CD8-positive, alpha-beta T cell (primary cell): ENCODE measurements at regions of chr5 and their contacts with region 1.

Region 1: GRCh38 chr5:32232441-32233219 is 58.5 kb upstream of the GOLPH3 start:
- DNase-seq: peak; percentile 54 to 86 (median 76)
- ATAC-seq: peak; percentile 88
- H3K4me3 ChIP-seq: no peak overlapping the region
- H3K4me3 Mint-ChIP-seq: no peak overlapping the region
- H3K27ac ChIP-seq: peak overlapping the region in 1 of 2 experiments; percentile 23
- H3K27ac Mint-ChIP-seq: peak overlapping the region; percentile 79
- H3K4me1 ChIP-seq: no peaks in the 10 kb centered on the region
- H3K4me1 Mint-ChIP-seq: no peaks in the 10 kb centered on the region
- H3K27me3 ChIP-seq: no peaks in the 10 kb centered on the region
- H3K27me3 Mint-ChIP-seq: no peaks in the 10 kb centered on the region
- CTCF ChIP-seq: peak; percentile 61

Region 2: DNA sequence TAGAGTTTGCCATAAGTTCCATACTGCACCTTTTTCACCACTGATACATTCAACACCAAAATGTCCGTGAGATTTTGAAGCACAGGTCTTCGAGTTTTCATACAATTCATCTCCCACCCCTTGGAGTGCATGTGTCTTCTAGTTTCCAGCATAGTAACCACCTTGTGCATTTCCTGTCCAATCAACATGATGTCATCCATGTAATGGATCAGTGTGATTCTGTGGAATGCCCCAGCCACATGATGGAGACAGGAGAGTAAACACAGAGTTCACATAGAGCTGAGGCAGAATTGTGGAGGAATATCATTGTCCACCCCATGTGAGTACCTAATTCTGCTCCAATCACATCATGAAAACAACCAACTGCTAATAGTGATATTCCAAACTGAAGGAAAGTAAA is 1480.6 kb before region 1 on chr5:
- CTCF ChIA-PET with region 1: no interaction called
- POLR2A ChIA-PET with region 1: no interaction called
- intact Hi-C with region 1: no loop called
- DNase-seq: no peak
- ATAC-seq: no peak
- H3K4me3 ChIP-seq: no peak overlapping the region
- H3K4me3 Mint-ChIP-seq: no peak overlapping the region
- H3K27ac ChIP-seq: no peak overlapping the region
- H3K27ac Mint-ChIP-seq: no peak overlapping the region
- H3K4me1 ChIP-seq: no peaks in the 10 kb centered on the region
- H3K4me1 Mint-ChIP-seq: no peaks in the 10 kb centered on the region
- H3K27me3 ChIP-seq: no peaks in the 10 kb centered on the region
- H3K27me3 Mint-ChIP-seq: no peaks in the 10 kb centered on the region
- CTCF ChIP-seq: no peak

Region 3: GRCh38 chr5:32339198-32339597 is 106.6 kb after region 1 on chr5:
- CTCF ChIA-PET with region 1: interaction called, 15 read pairs
- POLR2A ChIA-PET with region 1: no interaction called
- intact Hi-C with region 1: no loop called
- DNase-seq: no peak
- ATAC-seq: no peak
- H3K4me3 ChIP-seq: no peak overlapping the region
- H3K4me3 Mint-ChIP-seq: no peak overlapping the region
- H3K27ac ChIP-seq: no peak overlapping the region
- H3K27ac Mint-ChIP-seq: no peak overlapping the region
- H3K4me1 ChIP-seq: no peaks in the 10 kb centered on the region
- H3K4me1 Mint-ChIP-seq: no peaks in the 10 kb centered on the region
- H3K27me3 ChIP-seq: no peaks in the 10 kb centered on the region
- H3K27me3 Mint-ChIP-seq: no peaks in the 10 kb centered on the region
- CTCF ChIP-seq: no peak

Region 4: GRCh38 chr5:32443145-32443540 is 210.5 kb after region 1 on chr5:
- CTCF ChIA-PET with region 1: no interaction called
- POLR2A ChIA-PET with region 1: no interaction called
- intact Hi-C with region 1: no loop called
- DNase-seq: peak in 2 of 9 experiments; percentile 31 to 57
- ATAC-seq: peak; percentile 3
- H3K4me3 ChIP-seq: peak overlapping the region; percentile 57 to 97
- H3K4me3 Mint-ChIP-seq: peak overlapping the region; percentile 90
- H3K27ac ChIP-seq: peak overlapping the region; percentile 60 to 66
- H3K27ac Mint-ChIP-seq: peak overlapping the region; percentile 93
- H3K4me1 ChIP-seq: peaks cover 43% of the 10 kb centered on the region
- H3K4me1 Mint-ChIP-seq: peaks cover 38% of the 10 kb centered on the region
- H3K27me3 ChIP-seq: no peaks in the 10 kb centered on the region
- H3K27me3 Mint-ChIP-seq: no peaks in the 10 kb centered on the region
- CTCF ChIP-seq: no peak

Region 5: GRCh38 chr5:32613050-32613672 is 380.5 kb after region 1 on chr5:
- CTCF ChIA-PET with region 1: interaction called, 21 read pairs
- POLR2A ChIA-PET with region 1: no interaction called
- intact Hi-C with region 1: loop called (anchors 1 kb)
- DNase-seq: peak; percentile 68 to 89 (median 82)
- ATAC-seq: peak; percentile 92
- H3K4me3 ChIP-seq: no peak overlapping the region
- H3K4me3 Mint-ChIP-seq: no peak overlapping the region
- H3K27ac ChIP-seq: no peak overlapping the region
- H3K27ac Mint-ChIP-seq: no peak overlapping the region
- H3K4me1 ChIP-seq: no peaks in the 10 kb centered on the region
- H3K4me1 Mint-ChIP-seq: peaks cover 9% of the 10 kb centered on the region
- H3K27me3 ChIP-seq: no peaks in the 10 kb centered on the region
- H3K27me3 Mint-ChIP-seq: no peaks in the 10 kb centered on the region
- CTCF ChIP-seq: peak; percentile 94